ENCODE measurements at regions of chr12 and their contacts with region 1.

Region 1: DNA sequence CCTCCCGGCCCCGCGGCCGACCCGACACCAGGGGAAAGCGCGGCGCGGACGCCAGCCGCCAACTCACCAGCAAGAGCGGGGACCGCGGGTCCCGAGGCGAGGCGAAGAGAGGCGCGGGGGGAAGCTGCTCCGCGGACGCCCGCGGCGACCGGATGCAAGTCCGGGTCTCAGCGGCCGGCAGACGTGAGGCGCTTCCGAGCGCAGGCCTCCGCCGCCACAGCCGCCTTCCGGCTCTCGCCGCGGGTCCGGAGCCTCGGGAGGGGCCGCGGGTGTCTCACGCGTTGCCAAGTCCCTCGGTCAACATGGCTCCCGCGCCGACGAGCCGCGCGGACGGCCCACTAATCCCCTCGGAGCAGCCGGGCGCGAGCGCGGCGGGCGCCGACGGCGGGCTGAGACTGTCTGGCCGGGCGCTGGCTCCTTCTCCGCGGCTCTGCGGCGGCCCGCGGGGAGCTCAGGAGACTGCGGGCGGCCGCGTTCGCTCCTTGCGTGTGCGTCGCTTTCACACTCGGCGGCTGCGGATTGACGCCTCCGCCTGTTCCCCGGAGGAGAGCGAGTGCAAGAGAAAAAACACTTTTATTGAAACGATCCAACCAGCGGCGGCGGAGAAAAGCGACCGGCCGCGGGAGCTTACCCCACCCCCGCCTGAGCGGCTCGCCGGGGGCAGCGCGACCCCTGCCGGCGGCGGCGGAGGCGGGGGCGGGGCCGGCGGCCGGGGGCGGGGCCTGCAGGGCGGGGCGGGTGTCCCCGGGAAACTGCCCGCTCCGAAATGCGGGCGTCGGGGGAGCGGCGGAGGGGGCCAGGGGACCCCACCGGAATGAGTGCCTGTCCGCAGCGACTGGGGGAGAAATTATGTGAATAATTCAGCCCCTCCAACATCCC is at the start of gene CDK17:
- DNase-seq: peak; percentile 83
- H3K4me3 Mint-ChIP-seq: peak within 1 kb of the TSS; percentile 93
- H3K27ac Mint-ChIP-seq: peak within 1 kb of the TSS; percentile 97
- H3K4me1 Mint-ChIP-seq: peaks cover 66% of the 10 kb centered on the region
- H3K27me3 Mint-ChIP-seq: no peaks in the 10 kb centered on the region
- total RNA-seq, gene CDK17: 32.4 and 37.1 TPM in 2 replicates

Region 2: GRCh38 chr12:96061864-96062453 is 338.2 kb before region 1 on chr12:
- intact Hi-C with region 1: loop called (anchors 1 kb)
- DNase-seq: peak; percentile 58
- H3K4me3 Mint-ChIP-seq: no peak overlapping the region
- H3K27ac Mint-ChIP-seq: no peak overlapping the region
- H3K4me1 Mint-ChIP-seq: peaks cover 27% of the 10 kb centered on the region
- H3K27me3 Mint-ChIP-seq: no peaks in the 10 kb centered on the region

Region 3: DNA sequence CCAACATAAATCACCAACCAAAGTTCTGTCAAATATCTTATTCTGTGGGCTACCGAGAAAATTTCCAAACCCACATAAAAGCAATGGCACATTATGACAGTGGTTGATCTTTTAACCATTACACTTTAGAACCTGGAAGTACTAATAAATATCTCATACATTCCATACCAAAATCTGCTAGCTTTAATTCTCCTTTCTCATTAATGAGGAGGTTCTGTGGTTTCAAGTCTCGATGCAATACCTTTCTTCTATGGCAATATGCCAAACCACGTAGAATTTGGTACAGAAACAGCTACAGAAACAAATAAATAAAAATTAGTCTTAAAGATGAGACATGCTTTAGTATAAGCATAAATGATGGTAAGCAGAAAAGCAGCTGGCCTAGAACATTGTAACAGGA is 105.3 kb before region 1 on chr12:
- intact Hi-C with region 1: loop called (anchors 5 kb)
- DNase-seq: no peak
- H3K4me3 Mint-ChIP-seq: no peak overlapping the region
- H3K27ac Mint-ChIP-seq: no peak overlapping the region
- H3K4me1 Mint-ChIP-seq: no peaks in the 10 kb centered on the region
- H3K27me3 Mint-ChIP-seq: no peaks in the 10 kb centered on the region

Region 4: GRCh38 chr12:96375841-96376604 is 24.1 kb before region 1 on chr12:
- intact Hi-C with region 1: loop called (anchors 1 kb)
- DNase-seq: no peak
- H3K4me3 Mint-ChIP-seq: no peak overlapping the region
- H3K27ac Mint-ChIP-seq: no peak overlapping the region
- H3K4me1 Mint-ChIP-seq: peaks cover 69% of the 10 kb centered on the region
- H3K27me3 Mint-ChIP-seq: no peaks in the 10 kb centered on the region

Region 5: GRCh38 chr12:96427269-96427729 is 27.1 kb after region 1 on chr12:
- intact Hi-C with region 1: loop called (anchors 1 kb)
- DNase-seq: no peak
- H3K4me3 Mint-ChIP-seq: peak overlapping the region; percentile 1
- H3K27ac Mint-ChIP-seq: peak overlapping the region; percentile 53
- H3K4me1 Mint-ChIP-seq: peaks cover 52% of the 10 kb centered on the region
- H3K27me3 Mint-ChIP-seq: peaks cover 5% of the 10 kb centered on the region

Region 6: GRCh38 chr12:96501139-96501761 is 101.1 kb after region 1 on chr12:
- intact Hi-C with region 1: loop called (anchors 5 kb)
- DNase-seq: peak; percentile 33
- H3K4me3 Mint-ChIP-seq: peak overlapping the region; percentile 61
- H3K27ac Mint-ChIP-seq: peak overlapping the region; percentile 83
- H3K4me1 Mint-ChIP-seq: peaks cover 59% of the 10 kb centered on the region
- H3K27me3 Mint-ChIP-seq: peaks cover 4% of the 10 kb centered on the region